Posterior cingulate gyrus (tissue), 11 donors: ENCODE measurements at regions of chr6 and their contacts with region 1.

Region 1: GRCh38 chr6:105591053-105591452 is 188.2 kb upstream of the PREP start:
- DNase-seq: no peak

Region 2: DNA sequence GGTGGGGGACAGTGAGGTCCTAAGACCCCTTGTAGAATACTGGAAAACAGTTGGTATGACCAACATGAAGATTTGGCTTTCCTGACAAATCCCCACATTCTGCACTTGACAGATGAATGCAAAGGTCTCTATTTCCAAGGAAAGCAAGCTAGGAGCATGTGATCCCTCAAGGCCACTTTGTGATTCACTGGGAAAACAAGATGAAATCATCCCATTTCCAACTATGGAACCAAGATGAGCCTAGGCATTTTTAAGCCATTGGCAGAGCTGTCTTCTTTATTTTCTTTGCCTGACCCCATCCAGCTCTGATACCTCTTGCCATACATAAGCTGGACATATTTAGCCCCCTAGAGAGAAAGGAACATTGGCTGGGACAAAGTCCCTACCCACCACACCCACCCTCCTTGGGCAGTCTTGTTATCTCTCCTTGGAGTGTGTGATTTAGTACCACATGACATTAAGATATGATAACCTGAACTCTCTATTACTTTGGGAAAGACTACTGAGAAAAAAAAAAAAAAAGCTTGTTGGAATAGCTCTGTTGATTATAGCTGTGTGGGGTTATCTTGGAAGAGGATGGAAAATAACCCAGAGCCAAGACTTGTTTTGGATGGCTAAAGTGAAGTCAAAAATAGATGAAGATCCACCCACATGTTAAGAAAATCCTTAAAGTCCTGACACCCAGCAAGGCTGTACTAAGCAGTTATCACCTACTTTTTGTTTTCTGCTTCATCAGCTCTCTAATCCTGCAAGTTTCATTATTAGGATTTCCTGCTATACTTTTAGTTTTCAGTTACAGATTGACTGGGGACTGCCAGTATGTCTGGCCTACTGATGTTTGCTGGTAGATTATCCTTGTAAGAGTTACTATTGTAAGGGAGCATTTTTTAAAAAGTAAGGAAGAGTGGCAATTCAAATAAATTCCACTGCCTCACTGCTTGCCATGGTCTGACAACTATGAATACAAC is 98.1 kb before region 1 on chr6:
- intact Hi-C with region 1: loop called (anchors 10 kb)
- DNase-seq: no peak